ENCODE measurements at regions of chr2 and their contacts with region 1.

Region 1: DNA sequence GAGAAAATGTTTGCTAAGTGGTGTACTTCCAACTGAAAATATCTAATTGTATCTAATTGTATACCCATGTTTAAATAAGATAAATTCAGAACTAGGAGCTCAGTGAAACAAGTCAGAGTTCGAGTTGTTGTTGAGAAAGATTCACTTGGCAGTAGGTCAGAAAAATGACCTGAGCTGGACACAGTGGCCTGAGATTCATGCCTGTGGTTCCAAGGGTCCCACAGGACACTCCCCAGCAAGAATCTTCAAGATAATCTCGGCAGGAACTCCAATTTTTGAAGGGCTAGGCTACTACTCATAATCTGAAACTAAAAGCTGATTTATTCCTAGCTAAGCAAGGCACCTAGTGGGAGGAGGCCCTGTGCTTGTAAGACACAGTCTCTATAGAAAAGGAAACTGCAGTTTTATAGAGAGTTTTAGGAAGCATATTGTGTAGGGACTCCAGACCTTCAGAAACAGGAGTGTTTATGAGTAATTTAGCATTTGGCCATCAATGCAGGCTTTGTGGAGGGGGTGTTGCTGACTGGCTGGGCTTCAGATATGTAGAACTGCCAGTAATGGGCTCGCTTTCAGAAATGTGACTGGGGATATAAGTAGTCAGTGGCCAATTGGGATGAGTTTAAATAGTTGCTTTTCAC is 43.2 kb downstream of the SP140 start:
- DNase-seq: peak; percentile 63
- H3K4me3 Mint-ChIP-seq: peak overlapping the region; percentile 68
- H3K27ac Mint-ChIP-seq: peak overlapping the region; percentile 80
- H3K4me1 Mint-ChIP-seq: peaks cover 63% of the 10 kb centered on the region
- H3K27me3 Mint-ChIP-seq: no peaks in the 10 kb centered on the region

Region 2: DNA sequence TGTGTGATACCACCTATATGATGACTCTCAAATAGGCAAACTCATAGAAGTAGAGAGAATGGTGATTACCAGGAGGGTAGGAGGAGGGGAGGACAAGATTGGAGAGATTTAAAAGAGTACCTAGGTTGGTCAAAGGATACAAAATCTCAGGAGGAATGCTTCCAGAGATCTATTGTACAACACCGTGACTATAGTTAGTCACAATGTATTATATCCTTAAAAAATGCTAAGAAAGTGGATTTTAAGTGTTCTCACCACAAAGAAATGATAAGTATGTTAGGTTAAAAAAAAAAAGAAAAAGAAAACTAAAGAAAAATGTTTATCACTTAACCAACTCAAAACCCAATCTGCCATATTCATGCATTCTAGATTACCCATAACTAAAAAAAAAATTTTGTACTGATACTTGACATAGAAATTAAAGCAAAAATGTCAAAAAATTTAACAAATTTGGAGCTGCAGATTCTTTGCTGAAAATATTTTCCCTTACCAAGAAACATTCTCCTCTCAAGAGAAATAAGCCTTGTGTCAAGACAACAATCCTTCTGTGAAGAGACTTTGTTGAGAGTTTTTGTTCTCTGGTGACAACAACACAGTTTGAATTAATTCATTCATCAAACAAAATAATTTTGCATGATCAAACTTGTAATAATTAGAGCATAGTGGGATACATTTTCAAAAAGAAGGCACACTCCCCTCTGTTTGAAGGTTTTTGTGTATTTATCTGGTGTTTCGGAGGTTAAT is 767.5 kb before region 1 on chr2:
- intact Hi-C with region 1: no loop called
- DNase-seq: no peak
- H3K4me3 Mint-ChIP-seq: no peak overlapping the region
- H3K27ac Mint-ChIP-seq: no peak overlapping the region
- H3K4me1 Mint-ChIP-seq: no peaks in the 10 kb centered on the region
- H3K27me3 Mint-ChIP-seq: no peaks in the 10 kb centered on the region

Region 3: DNA sequence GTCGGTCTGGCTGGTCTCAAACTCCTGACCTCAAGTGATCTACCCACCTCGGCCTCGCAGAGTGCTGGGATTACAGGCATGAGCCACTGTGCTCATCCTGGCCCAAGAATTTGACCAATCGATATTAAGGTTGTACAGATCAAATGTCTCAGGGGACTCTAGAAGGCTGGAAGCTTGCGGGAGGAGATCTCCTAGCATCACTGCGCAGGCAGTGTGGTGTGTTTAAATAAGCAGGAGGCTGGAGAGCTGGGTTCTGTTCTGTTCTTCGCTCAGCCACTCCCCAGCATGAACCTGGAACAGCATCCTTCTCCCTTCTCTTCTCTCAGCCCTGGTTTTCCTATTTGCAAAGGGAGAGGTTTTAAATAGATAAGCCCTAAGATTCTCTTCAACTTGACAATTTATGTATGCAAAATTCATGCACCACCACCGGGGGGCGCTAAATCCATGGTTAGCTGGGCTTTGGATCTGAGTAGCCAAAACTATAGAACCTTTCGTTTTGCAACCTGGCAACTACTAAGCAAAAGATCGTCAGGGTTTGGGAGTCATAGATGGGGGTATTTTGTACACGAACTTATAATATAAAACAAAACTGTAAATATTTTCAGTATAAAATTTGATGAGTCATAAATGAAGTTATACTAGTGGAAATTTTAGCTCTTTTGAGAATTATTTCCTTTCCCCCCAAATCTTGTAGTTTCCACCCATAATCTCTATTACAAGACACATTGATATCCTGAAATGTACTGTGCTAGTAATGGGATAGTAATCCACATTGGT is 260.6 kb before region 1 on chr2:
- intact Hi-C with region 1: no loop called
- DNase-seq: peak; percentile 94
- H3K4me3 Mint-ChIP-seq: no peak overlapping the region
- H3K27ac Mint-ChIP-seq: no peak overlapping the region
- H3K4me1 Mint-ChIP-seq: peaks cover 2% of the 10 kb centered on the region
- H3K27me3 Mint-ChIP-seq: no peaks in the 10 kb centered on the region

Region 4: DNA sequence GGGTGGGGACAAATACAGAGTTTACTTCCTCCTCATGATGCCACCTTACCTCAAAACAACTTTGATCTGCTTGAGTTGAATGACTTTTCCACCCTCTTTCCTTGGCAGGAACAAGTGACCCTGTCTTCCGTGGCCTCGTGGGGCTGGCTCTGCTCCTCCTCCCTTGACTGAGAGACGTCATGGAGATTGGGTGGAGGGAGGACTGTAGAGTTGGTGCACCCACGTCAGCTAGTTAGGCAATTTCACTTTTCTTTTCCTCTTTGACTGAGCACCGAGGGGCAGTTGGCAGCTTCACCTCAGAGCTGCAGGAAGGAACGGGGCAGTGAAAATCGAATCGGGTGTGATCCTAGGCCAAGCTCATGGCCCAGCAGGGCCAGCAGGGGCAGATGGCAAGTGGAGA is 43.2 kb before region 1 on chr2 and contains the start of gene SP140:
- intact Hi-C with region 1: loop called (anchors 2 kb)
- DNase-seq: peak; percentile 95
- H3K4me3 Mint-ChIP-seq: peak within 1 kb of the TSS; percentile 85
- H3K27ac Mint-ChIP-seq: peak within 1 kb of the TSS; percentile 98
- H3K4me1 Mint-ChIP-seq: peaks cover 62% of the 10 kb centered on the region
- H3K27me3 Mint-ChIP-seq: no peaks in the 10 kb centered on the region
- total RNA-seq, gene SP140: 236 and 241 TPM in 2 replicates

Region 5: DNA sequence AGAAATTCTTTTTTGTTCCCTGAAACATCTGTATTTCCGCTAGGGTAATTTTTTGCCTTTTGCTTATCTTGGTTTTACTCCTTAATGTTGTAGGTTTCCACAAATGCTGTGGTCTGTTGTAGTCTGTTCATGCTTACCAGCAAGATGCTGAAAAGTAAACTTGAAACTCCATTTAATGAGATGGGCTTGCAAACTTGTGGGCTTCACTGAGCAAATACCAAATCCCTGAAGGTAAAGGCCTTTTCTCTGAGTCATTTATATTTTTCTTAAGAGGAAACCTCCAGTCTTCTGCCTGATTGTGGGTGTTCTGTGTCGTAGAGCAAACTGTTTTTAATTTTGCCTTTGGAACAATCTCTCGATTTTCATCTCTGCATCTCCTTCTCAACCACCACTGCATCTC is 33.9 kb before region 1 on chr2:
- intact Hi-C with region 1: loop called (anchors 2 kb)
- DNase-seq: peak; percentile 57
- H3K4me3 Mint-ChIP-seq: peak overlapping the region; percentile 78
- H3K27ac Mint-ChIP-seq: peak overlapping the region; percentile 97
- H3K4me1 Mint-ChIP-seq: peaks cover 44% of the 10 kb centered on the region
- H3K27me3 Mint-ChIP-seq: no peaks in the 10 kb centered on the region

Region 6: DNA sequence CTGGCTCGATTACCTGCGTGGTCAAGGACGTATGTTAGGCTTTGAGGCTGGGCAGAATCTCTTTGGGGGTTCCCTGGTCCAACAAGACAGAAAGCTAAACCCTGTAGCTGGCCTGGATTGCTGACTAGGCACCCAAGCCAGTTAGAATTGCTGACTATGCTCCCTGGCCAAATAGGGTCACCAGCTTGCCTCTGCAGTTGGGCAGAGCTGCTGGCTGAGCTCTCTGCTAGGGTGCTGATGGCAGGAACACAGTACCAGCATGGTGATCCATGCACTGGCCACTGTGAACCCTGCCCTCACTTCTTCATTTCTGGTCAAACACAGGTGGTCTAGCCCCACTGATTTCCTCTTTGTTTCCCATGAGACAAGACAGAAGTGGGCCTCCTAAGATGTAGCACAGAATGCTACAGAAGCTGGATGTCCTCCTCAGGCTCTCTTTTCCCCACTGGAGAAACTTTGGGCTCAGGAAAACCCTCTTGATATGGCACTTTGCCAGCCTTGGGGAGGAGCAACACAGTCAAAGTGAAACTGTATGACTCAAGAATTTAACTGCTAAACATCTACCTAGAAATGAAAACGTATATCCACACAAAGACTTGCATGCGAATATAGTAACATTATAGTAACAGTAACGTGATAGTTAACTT is 79.1 kb after region 1 on chr2:
- intact Hi-C with region 1: loop called (anchors 5 kb)
- DNase-seq: peak; percentile 86
- H3K4me3 Mint-ChIP-seq: peak overlapping the region; percentile 62
- H3K27ac Mint-ChIP-seq: peak overlapping the region; percentile 93
- H3K4me1 Mint-ChIP-seq: peaks cover 59% of the 10 kb centered on the region
- H3K27me3 Mint-ChIP-seq: no peaks in the 10 kb centered on the region

Measured in activated CD4-positive, alpha-beta T cell treated with anti-CD3 and anti-CD28 coated beads, Interleukin-2, amount 10 ng/mL, durations not matched to agents 24 days and 14 days (primary cell).